HCT116 (cell line): ENCODE measurements at regions of chr22 and their contacts with region 1.

Region 1: GRCh38 chr22:24994070-24994763 is 41.7 kb downstream of the KIAA1671 start:
- DNase-seq: peak; percentile 73
- ATAC-seq: peak; percentile 74
- H3K4me3 ChIP-seq: peak overlapping the region in 1 of 2 experiments; percentile 11; a peak in 1 of 4 replicates
- H3K27ac ChIP-seq: peak overlapping the region; percentile 61; the same call in 1 of the 2 replicates
- H3K4me1 ChIP-seq: peaks cover 76 to 84% of the 10 kb centered on the region in 2 experiments
- H3K27me3 ChIP-seq: no peaks in the 10 kb centered on the region
- CTCF ChIP-seq: peak; percentile 47 to 57 (median 55)
- POLR2A ChIP-seq: no peak
- RAD21 ChIP-seq: peak; percentile 76

Region 2: GRCh38 chr22:24951942-24952836 is 42.0 kb before region 1 on chr22 and contains the start of gene KIAA1671:
- CTCF ChIA-PET with region 1: interaction called, 5 read pairs
- POLR2A ChIA-PET with region 1: no interaction called
- RAD21 ChIA-PET with region 1: no interaction called
- intact Hi-C with region 1: loop called (anchors 1 kb)
- DNase-seq: peak; percentile 53
- ATAC-seq: peak; percentile 88
- H3K4me3 ChIP-seq: peak within 1 kb of the TSS; percentile 86
- H3K27ac ChIP-seq: peak within 1 kb of the TSS; percentile 98
- H3K4me1 ChIP-seq: peaks cover 34 to 54% of the 10 kb centered on the region in 2 experiments
- H3K27me3 ChIP-seq: no peaks in the 10 kb centered on the region
- CTCF ChIP-seq: peak; percentile 95 to 98 (median 97)
- POLR2A ChIP-seq: peak; percentile 76
- RAD21 ChIP-seq: peak; percentile 98
- total RNA-seq, gene KIAA1671: 36.8 TPM

Region 3: GRCh38 chr22:25027959-25028840 is 34.0 kb after region 1 on chr22:
- CTCF ChIA-PET with region 1: no interaction called
- POLR2A ChIA-PET with region 1: no interaction called
- RAD21 ChIA-PET with region 1: no interaction called
- intact Hi-C with region 1: loop called (anchors 2 kb)
- DNase-seq: no peak
- ATAC-seq: peak; percentile 65
- H3K4me3 ChIP-seq: no peak overlapping the region
- H3K27ac ChIP-seq: no peak overlapping the region; the same call in 1 of the 2 replicates
- H3K4me1 ChIP-seq: peaks cover 24 to 37% of the 10 kb centered on the region in 2 experiments
- H3K27me3 ChIP-seq: no peaks in the 10 kb centered on the region
- CTCF ChIP-seq: peak; percentile 35 to 53 (median 35); a peak in 3 of 6 replicates
- POLR2A ChIP-seq: no peak
- RAD21 ChIP-seq: peak; percentile 73

Region 4: GRCh38 chr22:25048659-25049647 is 54.7 kb after region 1 on chr22:
- CTCF ChIA-PET with region 1: interaction called, 3 read pairs
- POLR2A ChIA-PET with region 1: no interaction called
- RAD21 ChIA-PET with region 1: interaction called in 1 of 2 experiments, 3 read pairs
- intact Hi-C with region 1: loop called (anchors 5 kb)
- DNase-seq: peak; percentile 46
- ATAC-seq: peak; percentile 95
- H3K4me3 ChIP-seq: no peak overlapping the region
- H3K27ac ChIP-seq: no peak overlapping the region
- H3K4me1 ChIP-seq: peaks cover 0 to 17% of the 10 kb centered on the region in 2 experiments; a peak in 2 of 4 replicates
- H3K27me3 ChIP-seq: no peaks in the 10 kb centered on the region
- CTCF ChIP-seq: peak; percentile 80 to 90 (median 88)
- POLR2A ChIP-seq: no peak
- RAD21 ChIP-seq: peak; percentile 95